MCF 10A (cell line): ENCODE measurements at regions of chr7 and their contacts with region 1.

Region 1: DNA sequence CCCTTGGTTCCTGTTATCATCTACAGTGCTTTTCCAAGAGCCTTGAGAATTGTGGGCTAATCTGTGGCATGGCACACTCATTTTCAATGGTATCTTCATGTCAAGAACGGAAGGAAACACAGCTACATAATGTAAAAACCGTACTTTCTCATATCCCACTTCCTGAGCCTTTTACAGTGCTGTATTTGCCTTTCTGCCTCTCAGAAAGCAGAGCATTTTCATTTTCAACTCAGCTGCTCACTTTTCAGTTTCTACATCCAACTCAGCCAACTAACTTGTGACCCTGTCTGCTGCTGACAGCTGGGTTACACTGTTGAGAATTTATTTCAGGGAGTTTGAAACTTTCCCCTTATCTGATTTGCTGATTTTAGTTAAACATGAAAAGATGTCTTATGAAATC is 875.8 kb upstream of the KCND2 start:
- DNase-seq: no peak
- H3K4me3 Mint-ChIP-seq: no peak overlapping the region
- H3K27ac Mint-ChIP-seq: no peak overlapping the region
- H3K4me1 Mint-ChIP-seq: no peaks in the 10 kb centered on the region
- H3K27me3 Mint-ChIP-seq: peaks cover 75% of the 10 kb centered on the region
- CTCF ChIP-seq: no peak

Region 2: GRCh38 chr7:119374436-119374835 is 22.7 kb before region 1 on chr7:
- CTCF ChIA-PET with region 1: no interaction called
- POLR2A ChIA-PET with region 1: no interaction called
- intact Hi-C with region 1: no loop called
- DNase-seq: no peak
- H3K4me3 Mint-ChIP-seq: no peak overlapping the region
- H3K27ac Mint-ChIP-seq: no peak overlapping the region
- H3K4me1 Mint-ChIP-seq: no peaks in the 10 kb centered on the region
- H3K27me3 Mint-ChIP-seq: peaks cover 24% of the 10 kb centered on the region
- CTCF ChIP-seq: no peak

Region 3: GRCh38 chr7:120089968-120090367 is 692.8 kb after region 1 on chr7:
- CTCF ChIA-PET with region 1: no interaction called
- POLR2A ChIA-PET with region 1: no interaction called
- intact Hi-C with region 1: loop called (anchors 5 kb)
- DNase-seq: peak; percentile 33
- H3K4me3 Mint-ChIP-seq: no peak overlapping the region
- H3K27ac Mint-ChIP-seq: no peak overlapping the region
- H3K4me1 Mint-ChIP-seq: no peaks in the 10 kb centered on the region
- H3K27me3 Mint-ChIP-seq: peaks cover 91% of the 10 kb centered on the region
- CTCF ChIP-seq: no peak